Activated naive CD8-positive, alpha-beta T cell treated with anti-CD3 and anti-CD28 coated beads, Interleukin-2, amount 10 ng/mL, durations not matched to agents 7 days and 5 days (primary cell): ENCODE measurements at regions of chr16 and their contacts with region 1.

Region 1: DNA sequence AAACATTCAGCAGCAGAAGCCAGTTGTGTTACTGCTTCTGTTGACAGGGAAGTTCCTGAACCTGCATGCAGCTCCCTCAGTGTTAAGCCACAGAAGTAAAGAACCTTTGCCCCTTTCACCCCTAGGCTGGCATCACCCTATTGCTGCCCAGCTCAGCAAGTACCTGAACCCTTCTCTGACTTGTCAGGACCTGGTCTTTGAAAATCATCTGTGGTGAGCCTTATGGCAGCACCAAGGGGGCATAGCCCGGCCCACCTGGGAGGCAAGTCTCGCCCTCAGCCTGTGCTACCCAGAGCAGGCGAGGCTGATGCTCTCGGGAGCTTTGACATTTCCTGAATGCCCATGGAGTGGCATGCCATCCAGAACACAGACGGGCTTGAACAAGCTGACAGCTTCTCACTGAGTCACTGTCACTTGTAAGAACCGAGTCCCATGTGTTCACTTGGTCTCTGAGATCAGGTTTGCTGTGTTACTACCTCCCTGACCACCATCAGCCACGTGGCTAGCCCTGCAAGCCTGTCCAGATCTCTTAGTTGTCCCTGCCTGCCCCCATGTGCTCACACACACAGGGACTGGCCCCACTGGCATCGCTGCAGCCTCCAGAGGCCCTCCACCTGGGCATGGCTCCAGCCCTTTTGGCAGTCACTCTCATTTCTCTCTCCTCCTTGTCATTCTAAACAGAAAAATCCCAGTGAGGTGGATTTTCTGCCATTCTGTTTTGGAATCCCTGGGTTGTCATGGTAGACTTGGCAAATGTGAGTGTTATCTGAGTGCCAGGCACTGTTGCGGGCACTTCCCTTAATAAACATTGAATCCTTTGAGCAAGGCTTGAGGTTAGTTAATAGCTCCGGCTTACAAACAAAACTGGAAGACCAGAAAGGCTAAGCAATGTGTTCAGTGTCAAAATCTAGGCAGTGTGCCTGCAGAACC is 2.9 kb upstream of the CARMIL2 start:
- DNase-seq: no peak
- ATAC-seq: no peak
- H3K4me3 Mint-ChIP-seq: no peak overlapping the region
- H3K27ac Mint-ChIP-seq: no peak overlapping the region
- H3K4me1 Mint-ChIP-seq: peaks cover 5% of the 10 kb centered on the region
- H3K27me3 Mint-ChIP-seq: no peaks in the 10 kb centered on the region

Region 2: DNA sequence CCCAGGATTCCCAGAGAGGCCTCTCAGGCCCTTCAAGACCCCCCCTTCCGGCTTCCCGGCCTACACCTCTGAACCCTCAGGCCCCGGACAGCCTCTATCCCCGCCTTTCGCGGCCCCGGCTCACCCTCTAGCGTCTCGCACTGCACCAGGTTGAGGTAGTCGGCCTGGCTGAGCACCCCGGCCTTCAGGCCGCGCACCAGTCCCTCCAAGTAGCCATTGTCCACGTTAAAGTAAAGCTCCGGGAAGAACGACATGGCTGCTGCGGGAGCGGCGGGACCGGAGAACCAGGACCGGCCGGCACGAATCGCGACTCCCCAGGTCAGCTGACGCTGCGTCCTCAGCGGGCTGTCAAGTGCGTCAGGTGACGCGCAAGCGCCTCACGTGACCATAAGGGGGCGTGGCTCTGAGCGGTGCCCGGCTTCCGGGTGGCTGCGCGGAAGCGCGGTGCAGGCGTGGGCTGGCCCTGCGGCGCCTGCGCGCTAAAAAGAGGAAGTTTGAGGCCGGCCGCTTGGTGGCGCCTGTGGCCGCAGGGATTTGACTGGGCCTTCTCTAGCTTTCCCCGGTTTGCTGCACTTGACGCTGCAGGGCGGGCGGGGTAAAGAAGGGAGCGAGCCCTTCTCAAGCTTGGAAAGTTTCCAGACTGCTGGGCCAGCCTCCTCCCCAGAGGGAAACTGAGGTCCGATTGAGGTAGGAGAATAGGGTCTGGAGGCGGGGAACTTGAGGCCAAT is 161.0 kb before region 1 on chr16 and contains the start of gene ATP6V0D1:
- POLR2A ChIA-PET with region 1: interaction called, 19 read pairs
- DNase-seq: peak; percentile 100
- ATAC-seq: peak; percentile 89
- H3K4me3 Mint-ChIP-seq: peak within 1 kb of the TSS; percentile 93
- H3K27ac Mint-ChIP-seq: peak within 1 kb of the TSS; percentile 98
- H3K4me1 Mint-ChIP-seq: peaks cover 14% of the 10 kb centered on the region
- H3K27me3 Mint-ChIP-seq: no peaks in the 10 kb centered on the region
- total RNA-seq, gene ATP6V0D1: 41.8 to 48.8 TPM

Region 3: GRCh38 chr16:67537270-67537635 is 104.8 kb before region 1 on chr16:
- POLR2A ChIA-PET with region 1: interaction called, 10 read pairs
- DNase-seq: peak; percentile 72
- ATAC-seq: peak; percentile 38
- H3K4me3 Mint-ChIP-seq: peak overlapping the region; percentile 86
- H3K27ac Mint-ChIP-seq: peak overlapping the region; percentile 73
- H3K4me1 Mint-ChIP-seq: peaks cover 16% of the 10 kb centered on the region
- H3K27me3 Mint-ChIP-seq: peaks cover 28% of the 10 kb centered on the region

Region 4: GRCh38 chr16:67555795-67556212 is 86.2 kb before region 1 on chr16:
- POLR2A ChIA-PET with region 1: interaction called, 66 read pairs
- DNase-seq: no peak
- ATAC-seq: peak; percentile 98
- H3K4me3 Mint-ChIP-seq: peak overlapping the region; percentile 81
- H3K27ac Mint-ChIP-seq: peak overlapping the region; percentile 100
- H3K4me1 Mint-ChIP-seq: peaks cover 48% of the 10 kb centered on the region
- H3K27me3 Mint-ChIP-seq: no peaks in the 10 kb centered on the region

Region 5: GRCh38 chr16:67595033-67595355 is 47.0 kb before region 1 on chr16:
- POLR2A ChIA-PET with region 1: no interaction called
- DNase-seq: no peak
- ATAC-seq: no peak
- H3K4me3 Mint-ChIP-seq: no peak overlapping the region
- H3K27ac Mint-ChIP-seq: no peak overlapping the region
- H3K4me1 Mint-ChIP-seq: peaks cover 24% of the 10 kb centered on the region
- H3K27me3 Mint-ChIP-seq: no peaks in the 10 kb centered on the region

Region 6: GRCh38 chr16:67660564-67661028 is 18.6 kb after region 1 on chr16 and contains the start of gene PARD6A:
- POLR2A ChIA-PET with region 1: interaction called, 72 read pairs
- DNase-seq: peak; percentile 93
- ATAC-seq: peak; percentile 85
- H3K4me3 Mint-ChIP-seq: peak within 1 kb of the TSS; percentile 95
- H3K27ac Mint-ChIP-seq: peak within 1 kb of the TSS; percentile 95
- H3K4me1 Mint-ChIP-seq: peaks cover 14% of the 10 kb centered on the region
- H3K27me3 Mint-ChIP-seq: no peaks in the 10 kb centered on the region
- total RNA-seq, gene PARD6A: 9.5 to 11.1 TPM

Region 7: DNA sequence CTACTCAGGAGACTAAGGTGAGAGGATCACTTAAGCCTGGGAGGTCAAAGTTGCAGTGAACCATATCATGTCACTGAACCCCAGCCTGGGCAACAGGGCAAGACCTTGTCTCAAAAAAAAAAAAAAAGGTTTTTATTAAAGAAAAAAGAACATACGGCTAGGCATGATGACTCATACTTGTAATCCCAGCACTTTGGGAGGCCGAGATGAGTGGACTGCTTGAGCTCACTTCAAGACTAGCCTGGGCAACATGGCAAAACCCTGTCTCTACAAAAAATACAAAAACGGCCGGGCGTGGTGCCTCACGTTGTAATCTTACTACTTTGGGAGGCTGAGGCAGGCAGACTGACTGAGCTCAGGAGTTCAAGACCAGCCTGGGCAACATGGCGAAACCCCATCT is 125.9 kb after region 1 on chr16:
- POLR2A ChIA-PET with region 1: no interaction called
- DNase-seq: no peak
- ATAC-seq: no peak
- H3K4me3 Mint-ChIP-seq: no peak overlapping the region
- H3K27ac Mint-ChIP-seq: no peak overlapping the region
- H3K4me1 Mint-ChIP-seq: peaks cover 3% of the 10 kb centered on the region
- H3K27me3 Mint-ChIP-seq: no peaks in the 10 kb centered on the region

Region 8: DNA sequence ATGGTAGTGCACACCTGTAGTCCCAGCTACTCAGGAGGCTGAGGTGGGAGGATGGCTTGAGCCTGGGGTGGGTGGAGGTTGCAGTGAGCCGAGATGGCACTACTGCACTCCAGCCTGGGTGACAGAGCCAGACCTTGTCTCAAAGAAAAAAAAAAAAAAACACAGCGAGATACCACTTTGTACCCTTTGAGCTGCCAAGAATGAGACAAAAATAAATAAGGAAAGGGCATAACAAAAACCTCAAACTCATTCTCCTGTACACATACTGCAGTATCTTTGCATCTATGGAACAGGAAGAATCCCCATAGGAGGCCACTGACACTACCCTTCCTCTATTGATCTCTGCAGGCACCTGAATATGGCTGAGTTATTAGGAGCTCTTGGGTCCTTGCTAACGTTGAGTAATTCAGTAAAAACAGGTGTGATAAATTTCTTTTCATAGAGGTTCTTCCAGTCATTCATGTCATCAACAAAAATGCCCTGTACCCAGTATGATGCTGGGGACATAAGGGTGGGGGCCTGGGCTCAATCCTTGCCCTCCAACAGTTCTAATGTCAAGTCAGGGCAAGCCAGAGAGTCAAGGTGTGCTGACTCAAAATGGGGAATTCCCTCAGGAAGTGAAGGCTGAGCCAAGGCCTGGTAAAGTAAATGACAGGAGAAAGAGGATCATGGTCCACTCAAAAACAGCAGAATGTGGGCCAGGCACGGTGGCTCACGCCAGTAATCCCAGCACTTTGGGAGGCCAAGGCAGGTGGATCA is 137.4 kb after region 1 on chr16:
- POLR2A ChIA-PET with region 1: no interaction called
- DNase-seq: no peak
- ATAC-seq: no peak
- H3K4me3 Mint-ChIP-seq: no peak overlapping the region
- H3K27ac Mint-ChIP-seq: peak overlapping the region; percentile 63
- H3K4me1 Mint-ChIP-seq: peaks cover 21% of the 10 kb centered on the region
- H3K27me3 Mint-ChIP-seq: no peaks in the 10 kb centered on the region

Region 9: DNA sequence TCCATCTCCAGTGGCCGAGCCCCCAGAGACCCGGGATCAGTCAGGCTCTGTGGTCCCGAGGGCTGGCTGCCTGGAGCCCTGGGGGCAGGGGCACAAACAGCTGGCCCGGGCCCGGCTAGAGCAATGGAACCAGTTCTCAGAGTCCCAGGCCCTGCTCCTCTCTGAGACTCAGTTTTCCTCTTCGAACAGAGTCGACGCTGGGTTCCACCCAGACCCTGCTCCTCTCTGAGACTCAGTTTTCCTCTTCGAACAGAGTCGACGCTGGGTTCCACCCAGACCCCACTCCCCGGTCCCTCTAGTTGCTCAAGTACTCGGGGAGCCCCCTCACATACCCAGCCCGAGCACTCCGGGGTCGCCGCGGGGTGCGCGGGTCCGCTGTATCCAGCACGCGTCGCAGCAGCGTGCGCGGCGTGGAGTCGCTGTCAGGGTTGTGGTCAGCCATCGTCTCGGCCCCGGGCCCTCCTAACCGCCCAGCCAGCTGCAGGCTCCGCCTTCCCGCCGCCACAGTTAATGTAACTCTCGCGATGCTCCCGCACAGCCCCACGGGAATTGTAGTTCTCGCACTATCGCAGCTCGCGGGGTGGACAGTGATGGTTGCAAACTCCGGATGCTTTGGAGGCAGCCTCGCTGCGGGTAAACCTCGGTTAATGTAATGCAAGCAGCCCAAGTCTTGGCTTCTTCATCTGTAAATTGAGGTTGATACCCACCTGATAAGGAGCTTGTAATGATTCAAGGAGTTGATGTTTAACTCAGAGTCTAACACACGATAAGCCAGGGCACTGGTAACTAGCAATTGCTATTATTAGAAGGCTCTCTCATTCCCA is 191.6 kb after region 1 on chr16:
- POLR2A ChIA-PET with region 1: no interaction called
- DNase-seq: peak; percentile 94
- ATAC-seq: peak; percentile 98
- H3K4me3 Mint-ChIP-seq: peak overlapping the region; percentile 89
- H3K27ac Mint-ChIP-seq: peak overlapping the region; percentile 85
- H3K4me1 Mint-ChIP-seq: peaks cover 14% of the 10 kb centered on the region
- H3K27me3 Mint-ChIP-seq: no peaks in the 10 kb centered on the region